Ascending aorta (tissue), 2 donors: ENCODE measurements at regions of chr2 and their contacts with region 1.

Region 1: GRCh38 chr2:204145263-204145751 is 208.7 kb downstream of the ICOS start:
- DNase-seq: peak in 1 of 2 donors; percentile 83
- H3K4me3 ChIP-seq: peak overlapping the region; percentile 34 to 59
- H3K27ac ChIP-seq: peak overlapping the region; percentile 13 to 42
- H3K4me1 ChIP-seq: no peaks in the 10 kb centered on the region
- H3K27me3 ChIP-seq: no peaks in the 10 kb centered on the region
- CTCF ChIP-seq: peak; percentile 68 to 95 (median 95)

Region 2: GRCh38 chr2:203578759-203579643 is 566.3 kb before region 1 on chr2:
- intact Hi-C with region 1: no loop called
- DNase-seq: peak in 1 of 2 donors; percentile 76
- H3K4me3 ChIP-seq: no peak overlapping the region
- H3K27ac ChIP-seq: peak overlapping the region; percentile 56 to 76
- H3K4me1 ChIP-seq: peaks cover 3 to 21% of the 10 kb centered on the region in 2 donors
- H3K27me3 ChIP-seq: no peaks in the 10 kb centered on the region
- CTCF ChIP-seq: no peak

Region 3: GRCh38 chr2:204024503-204024902 is 120.8 kb before region 1 on chr2:
- intact Hi-C with region 1: loop called (anchors 2 kb)
- DNase-seq: peak in 1 of 2 donors; percentile 67
- H3K4me3 ChIP-seq: no peak overlapping the region
- H3K27ac ChIP-seq: peak overlapping the region; percentile 52 to 57
- H3K4me1 ChIP-seq: peaks cover 0 to 2% of the 10 kb centered on the region in 2 donors
- H3K27me3 ChIP-seq: no peaks in the 10 kb centered on the region
- CTCF ChIP-seq: peak; percentile 56 to 74 (median 72)

Region 4: DNA sequence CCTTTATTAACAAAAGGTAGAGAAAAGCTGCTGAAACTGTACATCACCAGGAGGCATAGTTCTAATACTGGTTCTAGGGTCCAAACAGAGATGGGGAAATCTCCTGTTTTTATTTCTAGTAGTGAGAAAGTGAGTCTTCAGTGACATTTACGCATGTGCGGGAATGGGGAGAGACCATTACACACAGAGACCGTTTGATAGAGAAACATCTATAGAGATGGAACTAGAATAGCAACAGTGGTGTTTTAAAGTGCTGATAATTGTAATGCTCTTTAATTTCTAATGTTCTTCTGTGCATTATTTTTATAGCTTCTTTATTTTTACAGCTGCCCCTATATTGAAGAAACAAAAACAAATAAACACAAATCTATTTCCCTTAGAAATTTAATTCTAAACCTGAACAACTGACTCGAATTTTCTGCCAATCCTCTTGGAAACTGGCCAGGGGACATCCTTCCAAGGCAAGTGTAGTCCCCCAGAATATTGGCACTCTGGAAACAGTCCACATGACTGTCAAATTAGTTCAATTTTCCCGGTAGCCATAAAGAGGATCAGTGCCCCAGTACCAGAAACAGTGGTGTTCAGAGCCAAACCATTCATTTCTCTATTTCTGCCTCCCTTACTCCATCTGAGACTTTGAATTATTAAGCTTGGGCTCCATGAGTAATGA is 52.2 kb after region 1 on chr2:
- intact Hi-C with region 1: no loop called
- DNase-seq: no peak
- H3K4me3 ChIP-seq: no peak overlapping the region
- H3K27ac ChIP-seq: no peak overlapping the region
- H3K4me1 ChIP-seq: no peaks in the 10 kb centered on the region
- H3K27me3 ChIP-seq: no peaks in the 10 kb centered on the region
- CTCF ChIP-seq: no peak

Region 5: DNA sequence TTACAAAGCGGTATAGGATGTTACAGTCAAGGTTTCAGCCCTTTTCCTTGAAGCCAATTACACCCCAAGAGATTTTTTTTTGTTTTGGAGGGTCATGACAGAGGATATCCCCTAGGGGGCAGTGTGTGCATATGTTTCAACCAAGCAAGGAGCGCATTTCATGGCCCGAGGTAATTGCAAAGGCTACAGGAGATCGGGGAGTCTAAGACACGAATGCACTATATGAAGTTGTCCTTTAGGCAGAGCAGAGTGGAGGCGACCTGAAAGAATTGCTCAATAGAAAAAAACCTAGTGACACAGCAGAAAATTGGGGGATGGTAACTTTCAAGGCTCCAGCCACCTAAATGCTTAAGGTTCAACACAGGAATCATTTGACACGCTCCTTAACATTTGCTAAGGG is 180.2 kb after region 1 on chr2:
- intact Hi-C with region 1: loop called (anchors 2 kb)
- DNase-seq: peak in 1 of 2 donors; percentile 69
- H3K4me3 ChIP-seq: no peak overlapping the region
- H3K27ac ChIP-seq: no peak overlapping the region
- H3K4me1 ChIP-seq: peaks cover 0 to 2% of the 10 kb centered on the region in 2 donors
- H3K27me3 ChIP-seq: no peaks in the 10 kb centered on the region
- CTCF ChIP-seq: peak; percentile 73 to 84 (median 78)

Region 6: DNA sequence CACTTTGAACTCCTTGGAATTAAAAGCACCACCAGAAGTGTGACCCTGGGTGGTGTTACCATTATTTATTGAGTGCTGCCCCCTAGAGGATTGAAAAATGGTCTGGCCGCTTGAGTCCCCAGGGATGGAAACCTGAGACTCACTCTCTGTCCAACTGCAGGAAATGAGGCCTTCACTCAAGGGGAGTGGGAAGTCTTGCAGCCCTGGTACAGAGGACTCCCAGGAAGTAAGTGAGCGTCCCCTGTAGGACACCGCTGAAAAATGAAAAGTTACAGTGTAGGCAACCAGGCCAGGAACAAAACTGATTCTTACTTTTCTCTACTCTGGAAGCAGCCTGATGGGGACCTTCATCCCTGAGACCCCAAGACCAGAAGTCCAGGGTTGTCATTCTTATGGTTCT is 1534.8 kb after region 1 on chr2:
- intact Hi-C with region 1: loop called (anchors 5 kb)
- DNase-seq: peak in 1 of 2 donors; percentile 77
- H3K4me3 ChIP-seq: no peak overlapping the region
- H3K27ac ChIP-seq: no peak overlapping the region
- H3K4me1 ChIP-seq: peaks cover 0 to 10% of the 10 kb centered on the region in 2 donors
- H3K27me3 ChIP-seq: no peaks in the 10 kb centered on the region
- CTCF ChIP-seq: peak; percentile 50 to 68 (median 65)